Body of pancreas (tissue), 4 donors: ENCODE measurements at regions of chr13 and their contacts with region 1.

Region 1: GRCh38 chr13:51583875-51584730 is at the start of gene WDFY2:
- DNase-seq: peak; percentile 100
- ATAC-seq: peak; percentile 93
- H3K4me3 ChIP-seq: peak within 1 kb of the TSS; percentile 52 to 93
- H3K27ac ChIP-seq: peak within 1 kb of the TSS; percentile 84 to 97 (median 91)
- H3K4me1 ChIP-seq: peaks cover 37% of the 10 kb centered on the region
- H3K27me3 ChIP-seq: no peaks in the 10 kb centered on the region
- CTCF ChIP-seq: peak in 4 of 7 experiments; percentile 33 to 66 (median 40)
- POLR2A ChIP-seq: peak; percentile 94 to 98 (median 97)
- total RNA-seq, gene WDFY2: 25.7 to 31.9 TPM

Region 2: GRCh38 chr13:51803422-51804294 is 219.6 kb after region 1 on chr13 and contains the start of gene DHRS12:
- intact Hi-C with region 1: loop called (anchors 5 kb)
- DNase-seq: peak; percentile 93 to 95 (median 94)
- ATAC-seq: peak; percentile 83
- H3K4me3 ChIP-seq: peak within 1 kb of the TSS; percentile 29 to 72
- H3K27ac ChIP-seq: peak within 1 kb of the TSS; percentile 98 to 100 (median 99)
- H3K4me1 ChIP-seq: peaks cover 59% of the 10 kb centered on the region
- H3K27me3 ChIP-seq: no peaks in the 10 kb centered on the region
- CTCF ChIP-seq: peak in 2 of 7 experiments; percentile 17 to 33
- POLR2A ChIP-seq: peak; percentile 94 to 98 (median 96)
- total RNA-seq, gene DHRS12: 4.0 to 38.7 TPM